ENCODE measurements at regions of chr13 and their contacts with region 1.

Region 1: DNA sequence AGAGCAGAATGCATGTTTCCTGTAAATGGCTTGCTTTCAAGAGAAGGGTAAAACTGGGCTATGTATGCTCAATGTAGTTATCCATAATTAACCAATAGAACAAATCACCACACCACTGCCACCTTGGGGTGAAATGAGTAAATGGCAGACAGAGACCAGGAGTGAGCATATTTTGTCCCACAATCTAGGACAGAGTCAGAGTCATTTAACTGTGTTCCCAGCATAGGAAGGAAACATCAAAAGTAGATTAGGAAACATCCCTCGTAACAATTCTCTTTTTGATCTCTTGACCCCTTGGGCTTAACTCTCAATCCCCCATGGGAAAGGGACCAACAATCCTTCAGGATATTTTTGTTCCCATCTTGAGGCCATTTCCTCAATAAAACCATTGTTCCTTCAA is 224.8 kb downstream of the NHLRC3 start:
- DNase-seq: peak; percentile 14
- H3K4me3 Mint-ChIP-seq: no peak overlapping the region
- H3K27ac Mint-ChIP-seq: no peak overlapping the region
- H3K4me1 Mint-ChIP-seq: peaks cover 9% of the 10 kb centered on the region
- H3K27me3 Mint-ChIP-seq: peaks cover 6% of the 10 kb centered on the region

Region 2: GRCh38 chr13:39051157-39051556 is 211.9 kb before region 1 on chr13:
- intact Hi-C with region 1: loop called (anchors 1 kb)
- DNase-seq: no peak
- H3K4me3 Mint-ChIP-seq: no peak overlapping the region
- H3K27ac Mint-ChIP-seq: no peak overlapping the region
- H3K4me1 Mint-ChIP-seq: peaks cover 6% of the 10 kb centered on the region
- H3K27me3 Mint-ChIP-seq: no peaks in the 10 kb centered on the region

Region 3: GRCh38 chr13:39144941-39145533 is 118.0 kb before region 1 on chr13:
- intact Hi-C with region 1: loop called (anchors 1 kb)
- DNase-seq: peak; percentile 3
- H3K4me3 Mint-ChIP-seq: no peak overlapping the region
- H3K27ac Mint-ChIP-seq: no peak overlapping the region
- H3K4me1 Mint-ChIP-seq: peaks cover 18% of the 10 kb centered on the region
- H3K27me3 Mint-ChIP-seq: peaks cover 16% of the 10 kb centered on the region

Region 4: DNA sequence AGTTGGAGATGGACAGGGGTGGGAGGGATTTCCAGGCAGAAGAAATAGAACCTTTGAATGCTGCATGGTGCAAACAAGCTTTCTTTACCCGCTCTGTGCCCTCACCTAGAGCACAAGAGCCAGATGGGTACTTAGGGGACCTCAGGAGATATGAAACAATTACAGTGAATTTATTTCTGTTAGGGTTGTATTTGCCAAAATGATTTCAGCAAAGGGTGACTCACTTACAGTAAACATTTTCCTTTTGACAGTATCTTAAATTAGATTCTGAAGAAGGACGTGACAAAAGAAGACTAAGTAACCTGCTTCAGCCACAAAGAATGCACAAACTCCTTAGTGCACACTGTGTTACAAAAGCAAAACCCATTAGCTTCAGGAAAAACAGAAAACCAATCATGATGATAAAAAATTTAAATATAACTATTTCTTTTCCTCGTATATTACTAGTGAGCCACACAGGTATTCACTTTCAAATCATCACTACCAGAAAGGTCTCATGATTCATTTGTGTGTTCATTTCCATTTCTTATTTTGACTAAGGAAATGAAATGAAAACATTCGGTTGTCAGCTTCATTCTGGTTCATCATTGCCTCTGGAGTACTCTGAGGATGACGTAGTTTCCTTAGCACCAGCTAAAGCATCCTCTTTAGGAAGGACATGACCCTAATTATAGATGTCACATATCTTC is 65.9 kb before region 1 on chr13:
- intact Hi-C with region 1: loop called (anchors 1 kb)
- DNase-seq: no peak
- H3K4me3 Mint-ChIP-seq: no peak overlapping the region
- H3K27ac Mint-ChIP-seq: peak overlapping the region; percentile 59
- H3K4me1 Mint-ChIP-seq: peaks cover 13% of the 10 kb centered on the region
- H3K27me3 Mint-ChIP-seq: no peaks in the 10 kb centered on the region